BJ (cell line): ENCODE measurements at regions of chr5 and their contacts with region 1.

Region 1: GRCh38 chr5:31854181-31855133 is 215.5 kb downstream of the PDZD2 start:
- DNase-seq: no peak
- H3K4me3 ChIP-seq: peak overlapping the region; percentile 33
- H3K27me3 ChIP-seq: peaks cover 17% of the 10 kb centered on the region
- CTCF ChIP-seq: no peak

Region 2: DNA sequence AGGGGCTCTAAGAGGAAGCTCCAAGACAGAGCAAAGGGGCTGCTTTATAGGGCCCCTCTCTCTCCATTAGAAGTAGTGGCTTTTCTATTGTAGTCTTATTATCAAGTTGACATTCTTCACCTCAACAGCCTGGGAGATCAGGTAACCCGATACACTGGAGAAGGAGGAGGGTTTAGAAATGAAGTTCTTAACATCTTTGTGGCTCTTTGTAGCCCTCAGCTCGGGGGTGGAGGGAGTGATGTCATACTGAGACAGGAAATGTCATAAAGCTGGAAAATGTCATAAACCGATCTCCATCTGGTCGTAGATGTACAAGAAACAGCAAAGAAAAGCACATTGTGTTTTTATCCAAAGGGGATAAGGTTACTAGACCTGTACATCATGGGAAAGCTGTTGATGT is 197.7 kb before region 1 on chr5:
- CTCF ChIA-PET with region 1: no interaction called
- POLR2A ChIA-PET with region 1: no interaction called
- DNase-seq: no peak
- H3K4me3 ChIP-seq: no peak overlapping the region
- H3K27me3 ChIP-seq: peaks cover 2% of the 10 kb centered on the region
- CTCF ChIP-seq: no peak

Region 3: GRCh38 chr5:32029261-32029660 is 174.8 kb after region 1 on chr5:
- CTCF ChIA-PET with region 1: no interaction called
- POLR2A ChIA-PET with region 1: interaction called, 16 read pairs
- DNase-seq: no peak
- H3K4me3 ChIP-seq: no peak overlapping the region
- H3K27me3 ChIP-seq: no peaks in the 10 kb centered on the region
- CTCF ChIP-seq: no peak